Mammary epithelial cell (primary cell): ENCODE measurements at regions of chr7 and their contacts with region 1.

Region 1: DNA sequence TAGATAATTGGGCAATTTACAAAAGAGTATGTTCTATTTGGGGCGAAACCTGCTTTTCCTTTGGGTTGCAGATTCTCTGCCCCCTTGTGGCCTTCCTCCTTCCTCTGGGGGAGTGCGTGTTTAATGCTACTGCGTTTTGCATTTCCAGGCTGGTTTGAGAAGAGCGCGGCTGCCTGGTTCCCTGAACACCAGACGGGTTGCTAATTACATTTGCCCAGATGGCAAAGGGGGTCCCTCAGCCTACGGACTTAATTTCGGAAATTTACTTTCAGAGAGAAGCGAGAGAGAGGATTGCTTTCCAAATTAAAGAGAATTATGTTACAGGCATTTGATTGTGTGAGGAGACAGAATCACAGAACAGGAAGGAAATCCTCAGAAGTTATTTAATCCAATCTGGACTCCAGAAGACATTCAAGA is 91.9 kb upstream of the JAZF1 start:
- DNase-seq: no peak
- H3K4me3 ChIP-seq: no peak overlapping the region
- H3K27ac ChIP-seq: no peak overlapping the region
- H3K4me1 ChIP-seq: no peaks in the 10 kb centered on the region
- H3K27me3 ChIP-seq: no peaks in the 10 kb centered on the region
- CTCF ChIP-seq: peak; percentile 52 to 64

Region 2: DNA sequence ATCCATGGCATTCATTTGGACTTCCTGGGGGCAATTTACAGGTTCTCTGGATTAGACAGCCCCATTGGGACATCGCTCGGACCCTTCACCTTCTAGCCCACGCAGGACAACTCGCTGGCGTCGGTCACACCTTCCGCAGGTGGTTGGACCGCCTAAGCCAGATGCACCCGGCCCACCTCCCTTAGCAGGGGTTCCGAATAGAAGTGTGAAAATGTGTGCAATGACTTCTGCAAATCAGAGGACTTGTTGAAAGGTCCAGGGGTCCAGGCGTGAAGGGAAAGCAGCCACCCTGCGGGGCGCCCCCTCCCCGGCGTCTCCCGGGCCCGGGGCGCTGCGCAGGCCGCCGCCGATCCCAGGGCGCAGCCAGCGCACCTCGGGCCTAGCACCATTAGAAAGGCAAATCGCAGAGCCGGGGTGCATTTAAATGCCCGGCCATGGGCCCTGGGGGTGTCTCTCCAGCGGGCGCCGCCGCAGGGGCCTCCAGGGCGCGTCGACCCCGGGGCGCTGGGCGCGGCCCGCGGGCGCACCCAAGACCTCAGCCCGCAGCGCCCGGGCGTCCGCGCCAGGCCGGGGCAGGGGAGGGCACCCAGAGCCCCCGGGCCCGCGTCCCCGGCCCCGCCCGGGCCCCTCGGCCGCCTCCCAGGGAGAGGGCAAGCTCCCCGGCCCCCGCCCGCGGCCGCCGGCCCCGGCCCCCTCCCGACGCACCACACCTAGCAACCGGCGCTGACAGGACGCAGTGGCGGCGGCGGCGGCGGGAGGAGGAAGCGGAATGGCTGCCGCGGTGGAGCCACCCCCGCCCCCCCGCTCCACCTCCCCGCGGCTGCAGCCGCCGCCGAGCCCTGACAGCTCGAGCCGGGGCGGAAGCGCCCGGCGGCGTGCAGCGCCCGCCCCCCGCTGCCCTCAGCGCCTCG is 93.1 kb before region 1 on chr7:
- CTCF ChIA-PET with region 1: no interaction called
- dilution Hi-C with region 1: no loop called
- in situ Hi-C with region 1: no loop called
- intact Hi-C with region 1: loop called (anchors 2 kb)
- DNase-seq: peak; percentile 63
- H3K4me3 ChIP-seq: peak overlapping the region; percentile 65 to 93 (median 75)
- H3K27ac ChIP-seq: peak overlapping the region; percentile 73
- H3K4me1 ChIP-seq: peaks cover 39% of the 10 kb centered on the region
- H3K27me3 ChIP-seq: no peaks in the 10 kb centered on the region
- CTCF ChIP-seq: no peak